Activated naive CD4-positive, alpha-beta T cell treated with anti-CD3 and anti-CD28 coated beads for 36 hours (primary cell): ENCODE measurements at regions of chr11 and their contacts with region 1.

Region 1: DNA sequence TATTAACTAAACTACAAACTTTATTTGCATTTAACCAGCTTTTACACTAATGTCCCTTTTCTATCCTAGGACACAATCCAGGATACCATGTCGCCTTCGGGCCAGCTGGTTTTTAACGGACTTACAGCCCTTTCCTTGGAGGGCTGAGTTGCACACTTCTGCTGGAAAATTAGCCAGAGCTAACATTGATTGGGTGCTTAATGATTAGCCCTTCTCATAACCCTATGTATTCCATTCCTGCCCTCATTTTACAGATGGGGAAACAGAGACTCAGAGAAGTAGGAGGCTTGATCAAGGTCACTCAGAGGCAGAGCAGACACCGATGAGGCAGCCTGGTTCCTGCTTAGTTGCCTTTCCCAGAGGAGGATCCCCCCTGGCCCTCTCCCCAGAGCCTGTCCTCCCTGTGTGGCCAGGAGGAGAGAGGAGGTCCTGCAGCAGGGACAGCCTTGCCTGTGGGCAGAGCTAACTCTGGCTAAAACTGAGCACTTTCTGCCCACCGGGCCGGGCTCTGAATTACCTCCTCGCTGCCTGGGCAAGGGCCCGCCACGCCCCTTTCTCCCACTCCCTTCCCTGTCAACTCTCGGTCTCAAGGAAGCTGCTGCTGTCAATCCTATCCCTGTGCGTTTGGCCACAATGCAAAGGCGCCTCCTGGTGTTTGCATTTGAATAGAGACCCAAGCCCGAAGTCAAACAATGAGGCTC is 59.6 kb upstream of the PAX6 start:
- DNase-seq: peak; percentile 51
- H3K4me3 Mint-ChIP-seq: no peak overlapping the region
- H3K27ac Mint-ChIP-seq: no peak overlapping the region
- H3K4me1 Mint-ChIP-seq: no peaks in the 10 kb centered on the region
- H3K27me3 Mint-ChIP-seq: peaks cover 30% of the 10 kb centered on the region

Region 2: DNA sequence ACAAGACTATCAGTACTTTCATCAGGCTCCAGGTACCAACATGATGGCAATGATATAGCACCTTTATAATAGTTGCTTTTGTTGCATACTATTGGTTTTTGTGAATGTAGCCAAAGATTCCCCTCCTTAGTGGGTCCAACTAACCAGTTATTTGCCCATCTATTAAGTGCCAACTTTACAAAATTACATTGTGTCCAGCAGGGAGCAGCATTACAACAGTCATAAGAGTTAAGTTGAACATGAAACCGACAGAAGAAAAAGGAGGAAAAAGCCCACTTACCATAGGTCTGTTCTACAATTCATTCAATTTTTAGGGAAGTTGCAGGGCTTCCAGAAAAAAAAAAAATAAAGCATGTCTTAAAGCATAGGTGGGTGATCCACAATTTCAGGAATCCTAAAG is 382.9 kb before region 1 on chr11:
- CTCF ChIA-PET with region 1: no interaction called
- intact Hi-C with region 1: loop called (anchors 10 kb)
- DNase-seq: peak; percentile 6
- H3K4me3 Mint-ChIP-seq: no peak overlapping the region
- H3K27ac Mint-ChIP-seq: no peak overlapping the region
- H3K4me1 Mint-ChIP-seq: peaks cover 11% of the 10 kb centered on the region
- H3K27me3 Mint-ChIP-seq: no peaks in the 10 kb centered on the region

Region 3: GRCh38 chr11:31499576-31500178 is 371.1 kb before region 1 on chr11:
- CTCF ChIA-PET with region 1: no interaction called
- intact Hi-C with region 1: no loop called
- DNase-seq: no peak
- H3K4me3 Mint-ChIP-seq: no peak overlapping the region
- H3K27ac Mint-ChIP-seq: no peak overlapping the region
- H3K4me1 Mint-ChIP-seq: peaks cover 16% of the 10 kb centered on the region
- H3K27me3 Mint-ChIP-seq: no peaks in the 10 kb centered on the region

Region 4: GRCh38 chr11:31641477-31642062 is 229.2 kb before region 1 on chr11:
- CTCF ChIA-PET with region 1: interaction called, 3 read pairs
- intact Hi-C with region 1: loop called (anchors 5 kb)
- DNase-seq: peak; percentile 6
- H3K4me3 Mint-ChIP-seq: no peak overlapping the region
- H3K27ac Mint-ChIP-seq: no peak overlapping the region
- H3K4me1 Mint-ChIP-seq: no peaks in the 10 kb centered on the region
- H3K27me3 Mint-ChIP-seq: no peaks in the 10 kb centered on the region

Region 5: GRCh38 chr11:31786996-31787685 is 83.6 kb before region 1 on chr11:
- CTCF ChIA-PET with region 1: no interaction called
- intact Hi-C with region 1: no loop called
- DNase-seq: no peak
- H3K4me3 Mint-ChIP-seq: no peak overlapping the region
- H3K27ac Mint-ChIP-seq: no peak overlapping the region
- H3K4me1 Mint-ChIP-seq: no peaks in the 10 kb centered on the region
- H3K27me3 Mint-ChIP-seq: peaks cover 6% of the 10 kb centered on the region

Region 6: GRCh38 chr11:31943056-31943780 is 72.5 kb after region 1 on chr11:
- CTCF ChIA-PET with region 1: no interaction called
- intact Hi-C with region 1: no loop called
- DNase-seq: peak; percentile 10
- H3K4me3 Mint-ChIP-seq: no peak overlapping the region
- H3K27ac Mint-ChIP-seq: no peak overlapping the region
- H3K4me1 Mint-ChIP-seq: no peaks in the 10 kb centered on the region
- H3K27me3 Mint-ChIP-seq: peaks cover 5% of the 10 kb centered on the region